MCF 10A (cell line): ENCODE measurements at regions of chr1 and their contacts with region 1.

Region 1: GRCh38 chr1:225777583-225778336 is at the start of gene SRP9:
- DNase-seq: peak; percentile 100
- H3K4me3 Mint-ChIP-seq: no peak within 1 kb of the TSS
- H3K27ac Mint-ChIP-seq: no peak within 1 kb of the TSS
- H3K4me1 Mint-ChIP-seq: peaks cover 21% of the 10 kb centered on the region
- H3K27me3 Mint-ChIP-seq: no peaks in the 10 kb centered on the region
- CTCF ChIP-seq: peak; percentile 96
- total RNA-seq, gene SRP9: 417 and 511 TPM in 2 replicates

Region 2: GRCh38 chr1:225480825-225481434 is 296.8 kb before region 1 on chr1:
- CTCF ChIA-PET with region 1: interaction called, 712 read pairs
- POLR2A ChIA-PET with region 1: interaction called, 19 read pairs
- intact Hi-C with region 1: loop called (anchors 1 kb)
- DNase-seq: peak; percentile 85
- H3K4me3 Mint-ChIP-seq: no peak overlapping the region
- H3K27ac Mint-ChIP-seq: no peak overlapping the region
- H3K4me1 Mint-ChIP-seq: peaks cover 7% of the 10 kb centered on the region
- H3K27me3 Mint-ChIP-seq: peaks cover 15% of the 10 kb centered on the region
- CTCF ChIP-seq: peak; percentile 100

Region 3: DNA sequence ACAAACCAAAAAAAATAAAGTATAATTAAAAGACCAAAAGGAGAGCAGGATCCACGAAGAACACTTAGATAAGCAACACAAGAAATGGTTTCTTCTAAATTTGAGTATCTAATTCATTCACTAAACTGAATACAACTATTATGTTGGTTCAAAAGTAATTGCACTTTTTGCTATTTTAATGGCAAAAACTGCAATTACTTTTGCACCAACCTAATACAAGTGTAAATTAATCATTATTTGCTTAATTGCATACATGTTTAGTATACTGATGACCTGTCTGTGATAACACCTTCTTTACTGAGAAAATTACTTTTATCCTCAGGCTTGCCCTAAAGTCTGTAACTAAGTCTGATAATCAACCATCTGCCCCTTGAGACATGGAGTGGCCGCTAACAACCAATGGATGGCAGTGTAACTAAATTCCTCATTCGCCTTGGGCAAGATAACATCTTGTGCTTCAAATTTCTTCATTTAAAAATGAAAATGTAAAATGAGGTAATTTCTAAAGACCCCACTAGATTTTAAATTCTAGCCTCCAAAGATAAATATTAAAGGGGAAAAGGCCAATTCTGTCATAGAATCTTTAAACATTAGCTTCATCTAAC is 210.1 kb before region 1 on chr1:
- CTCF ChIA-PET with region 1: interaction called, 136 read pairs
- POLR2A ChIA-PET with region 1: interaction called, 10 read pairs
- intact Hi-C with region 1: no loop called
- DNase-seq: peak; percentile 44
- H3K4me3 Mint-ChIP-seq: no peak overlapping the region
- H3K27ac Mint-ChIP-seq: no peak overlapping the region
- H3K4me1 Mint-ChIP-seq: peaks cover 13% of the 10 kb centered on the region
- H3K27me3 Mint-ChIP-seq: no peaks in the 10 kb centered on the region
- CTCF ChIP-seq: peak; percentile 20

Region 4: GRCh38 chr1:225746361-225747179 is 31.2 kb before region 1 on chr1:
- CTCF ChIA-PET with region 1: interaction called, 50 read pairs
- POLR2A ChIA-PET with region 1: interaction called, 230 read pairs
- intact Hi-C with region 1: no loop called
- DNase-seq: peak; percentile 98
- H3K4me3 Mint-ChIP-seq: peak overlapping the region; percentile 66
- H3K27ac Mint-ChIP-seq: peak overlapping the region; percentile 90
- H3K4me1 Mint-ChIP-seq: peaks cover 35% of the 10 kb centered on the region
- H3K27me3 Mint-ChIP-seq: no peaks in the 10 kb centered on the region
- CTCF ChIP-seq: no peak

Region 5: DNA sequence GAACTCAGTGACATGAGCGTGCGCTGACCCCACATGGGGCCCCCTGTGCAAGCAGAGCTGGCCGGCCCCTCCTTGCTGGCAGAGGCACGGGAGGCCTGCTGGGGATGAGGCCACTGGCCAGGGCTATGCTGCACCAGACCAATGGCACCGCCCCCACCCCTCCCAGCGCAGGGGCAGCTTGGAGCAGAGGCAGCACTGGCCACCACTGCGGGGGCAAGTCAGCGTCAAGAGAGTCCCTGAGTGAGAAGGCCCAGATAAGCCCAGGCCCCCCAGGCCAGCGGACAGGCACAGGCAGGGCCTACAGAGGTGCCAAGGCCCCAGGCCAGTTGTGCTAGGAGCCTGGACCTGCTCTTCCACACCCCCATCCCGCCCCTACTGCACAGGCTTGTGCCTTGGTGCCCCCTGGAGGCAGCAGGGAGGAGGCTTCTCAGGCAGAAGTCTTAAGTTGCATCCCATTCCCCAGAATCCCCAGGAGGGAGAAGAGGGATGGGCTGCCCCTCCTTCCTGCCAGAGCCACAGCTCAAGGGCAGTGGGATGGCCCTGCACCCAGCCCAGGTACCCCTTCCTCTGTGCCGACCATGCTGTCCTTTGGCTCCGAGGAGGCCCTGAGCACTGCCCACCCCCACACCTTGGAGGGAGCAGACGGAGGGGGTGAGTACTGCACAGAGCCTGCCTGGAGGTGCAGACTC is 68.0 kb after region 1 on chr1:
- CTCF ChIA-PET with region 1: interaction called, 32 read pairs
- POLR2A ChIA-PET with region 1: interaction called, 22 read pairs
- intact Hi-C with region 1: loop called (anchors 1 kb)
- DNase-seq: peak; percentile 95
- H3K4me3 Mint-ChIP-seq: no peak overlapping the region
- H3K27ac Mint-ChIP-seq: no peak overlapping the region
- H3K4me1 Mint-ChIP-seq: no peaks in the 10 kb centered on the region
- H3K27me3 Mint-ChIP-seq: no peaks in the 10 kb centered on the region
- CTCF ChIP-seq: peak; percentile 97

Region 6: GRCh38 chr1:225972344-225973152 is 194.8 kb after region 1 on chr1:
- CTCF ChIA-PET with region 1: interaction called, 55 read pairs
- POLR2A ChIA-PET with region 1: interaction called, 38 read pairs
- intact Hi-C with region 1: loop called (anchors 1 kb)
- DNase-seq: no peak
- H3K4me3 Mint-ChIP-seq: no peak overlapping the region
- H3K27ac Mint-ChIP-seq: peak overlapping the region; percentile 11
- H3K4me1 Mint-ChIP-seq: peaks cover 5% of the 10 kb centered on the region
- H3K27me3 Mint-ChIP-seq: no peaks in the 10 kb centered on the region
- CTCF ChIP-seq: no peak